Activated CD4-positive, alpha-beta memory T cell treated with anti-CD3 and anti-CD28 coated beads for 36 hours (primary cell): ENCODE measurements at regions of chrX and their contacts with region 1.

Region 1: DNA sequence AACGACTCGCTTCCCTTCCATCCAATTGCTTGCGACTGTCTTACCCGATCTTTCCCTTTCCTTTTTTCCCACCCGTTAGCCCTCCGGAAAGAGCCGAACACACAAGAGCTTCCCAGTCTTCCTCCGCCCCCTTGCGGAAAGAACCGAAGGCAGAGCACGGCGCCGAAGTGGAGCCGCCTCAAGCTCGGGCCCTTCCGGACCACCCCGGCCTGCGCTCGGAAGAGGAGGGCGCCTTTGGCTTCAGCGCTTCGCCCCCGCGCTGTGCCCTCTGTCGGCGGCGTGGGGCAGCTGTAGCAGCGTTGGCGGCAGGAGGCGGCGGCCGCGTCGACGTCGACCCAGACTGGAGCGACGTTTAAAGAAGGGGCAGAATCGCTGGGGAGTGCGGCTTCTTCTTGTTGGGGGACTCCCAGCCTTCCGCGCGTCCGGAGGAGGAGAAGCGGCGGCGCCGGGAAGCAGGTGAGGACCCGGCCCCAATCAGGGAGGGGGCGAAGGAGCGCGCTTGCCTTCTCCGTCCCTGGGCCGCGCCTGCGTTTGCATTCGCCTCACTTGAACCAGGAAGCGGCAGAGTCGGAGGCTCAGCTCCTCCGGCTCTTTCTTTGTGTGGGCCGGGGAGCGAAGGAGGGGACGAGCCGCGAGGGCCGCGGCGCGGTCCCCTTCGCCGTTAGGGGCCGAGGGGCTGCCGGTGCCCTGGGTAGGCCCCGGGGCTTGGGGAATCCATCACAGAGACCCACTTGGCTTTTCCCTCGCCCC is at the start of gene ZBTB33:
- DNase-seq: peak; percentile 92
- H3K4me3 Mint-ChIP-seq: peak within 1 kb of the TSS; percentile 92
- H3K27ac Mint-ChIP-seq: peak within 1 kb of the TSS; percentile 93
- H3K4me1 Mint-ChIP-seq: peaks cover 25% of the 10 kb centered on the region
- H3K27me3 Mint-ChIP-seq: no peaks in the 10 kb centered on the region
- total RNA-seq, gene ZBTB33: 13.6 to 14.0 TPM

Region 2: GRCh38 chrX:119638725-119639471 is 611.8 kb before region 1 on chrX:
- CTCF ChIA-PET with region 1: no interaction called
- POLR2A ChIA-PET with region 1: no interaction called
- intact Hi-C with region 1: no loop called
- DNase-seq: no peak
- H3K4me3 Mint-ChIP-seq: no peak overlapping the region
- H3K27ac Mint-ChIP-seq: peak overlapping the region; percentile 28
- H3K4me1 Mint-ChIP-seq: peaks cover 11% of the 10 kb centered on the region
- H3K27me3 Mint-ChIP-seq: no peaks in the 10 kb centered on the region

Region 3: DNA sequence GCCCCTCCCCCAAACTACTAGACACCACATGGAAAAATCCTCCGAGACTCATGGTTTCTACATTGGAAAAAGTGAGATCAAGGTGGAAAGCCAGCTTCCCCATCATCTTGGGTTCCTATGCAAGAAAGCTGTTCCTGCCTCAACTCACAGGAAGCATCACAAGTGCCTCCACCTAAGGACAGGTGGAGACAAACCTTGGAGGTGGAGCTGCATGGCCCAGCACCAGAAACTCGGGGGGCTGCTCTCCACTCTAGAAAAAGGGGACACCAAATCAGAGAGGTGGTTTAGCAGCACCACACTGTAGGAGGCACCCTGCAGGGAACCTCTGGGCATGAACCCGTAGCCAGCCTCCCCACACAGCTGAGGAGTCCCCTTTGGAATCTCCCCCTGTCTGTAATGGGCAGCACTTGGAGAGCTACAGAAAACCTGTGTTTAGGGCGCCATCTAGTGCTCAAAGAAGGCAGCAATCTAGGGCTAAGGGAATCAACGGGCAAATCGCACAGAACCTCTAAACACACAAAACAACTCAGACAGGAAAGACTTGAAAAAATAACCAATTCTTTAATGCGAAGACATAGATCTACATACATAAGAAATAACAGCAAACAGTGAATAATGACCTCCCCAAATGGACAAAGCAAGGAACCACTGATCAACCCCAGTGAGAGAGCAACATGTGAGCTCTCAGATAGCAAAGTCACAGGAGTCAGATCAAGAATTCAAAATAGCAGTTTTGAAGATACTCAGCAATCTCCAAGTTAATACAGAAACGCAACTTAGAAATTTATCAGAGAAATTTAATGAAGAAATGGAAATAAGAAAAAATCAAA is 37.0 kb before region 1 on chrX:
- CTCF ChIA-PET with region 1: interaction called, 11 read pairs
- POLR2A ChIA-PET with region 1: no interaction called
- intact Hi-C with region 1: no loop called
- DNase-seq: peak; percentile 60
- H3K4me3 Mint-ChIP-seq: no peak overlapping the region
- H3K27ac Mint-ChIP-seq: no peak overlapping the region
- H3K4me1 Mint-ChIP-seq: peaks cover 6% of the 10 kb centered on the region
- H3K27me3 Mint-ChIP-seq: no peaks in the 10 kb centered on the region

Region 4: DNA sequence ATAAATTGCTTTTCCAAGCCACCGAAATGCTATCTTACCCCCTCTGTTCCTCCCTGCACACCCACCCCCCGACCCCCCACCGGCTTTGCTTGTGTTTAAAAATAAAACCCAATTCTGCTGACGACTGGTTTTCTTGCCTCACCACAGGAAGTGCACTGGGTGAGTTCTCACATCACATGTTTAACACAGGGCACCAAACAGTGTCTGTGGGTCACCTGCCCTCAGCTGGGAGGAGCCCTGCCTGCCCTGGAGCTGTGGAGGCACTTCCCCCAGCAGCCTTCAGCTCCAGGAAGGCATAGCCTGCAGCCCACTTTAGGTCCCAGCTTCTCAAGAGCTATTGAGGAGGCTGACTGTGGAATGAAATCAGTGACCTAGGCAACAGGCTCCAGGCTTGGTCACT is 51.7 kb after region 1 on chrX:
- CTCF ChIA-PET with region 1: no interaction called
- POLR2A ChIA-PET with region 1: interaction called, 4 read pairs
- intact Hi-C with region 1: loop called (anchors 2 kb)
- DNase-seq: peak; percentile 70
- H3K4me3 Mint-ChIP-seq: no peak overlapping the region
- H3K27ac Mint-ChIP-seq: peak overlapping the region; percentile 43
- H3K4me1 Mint-ChIP-seq: peaks cover 25% of the 10 kb centered on the region
- H3K27me3 Mint-ChIP-seq: no peaks in the 10 kb centered on the region

Region 5: DNA sequence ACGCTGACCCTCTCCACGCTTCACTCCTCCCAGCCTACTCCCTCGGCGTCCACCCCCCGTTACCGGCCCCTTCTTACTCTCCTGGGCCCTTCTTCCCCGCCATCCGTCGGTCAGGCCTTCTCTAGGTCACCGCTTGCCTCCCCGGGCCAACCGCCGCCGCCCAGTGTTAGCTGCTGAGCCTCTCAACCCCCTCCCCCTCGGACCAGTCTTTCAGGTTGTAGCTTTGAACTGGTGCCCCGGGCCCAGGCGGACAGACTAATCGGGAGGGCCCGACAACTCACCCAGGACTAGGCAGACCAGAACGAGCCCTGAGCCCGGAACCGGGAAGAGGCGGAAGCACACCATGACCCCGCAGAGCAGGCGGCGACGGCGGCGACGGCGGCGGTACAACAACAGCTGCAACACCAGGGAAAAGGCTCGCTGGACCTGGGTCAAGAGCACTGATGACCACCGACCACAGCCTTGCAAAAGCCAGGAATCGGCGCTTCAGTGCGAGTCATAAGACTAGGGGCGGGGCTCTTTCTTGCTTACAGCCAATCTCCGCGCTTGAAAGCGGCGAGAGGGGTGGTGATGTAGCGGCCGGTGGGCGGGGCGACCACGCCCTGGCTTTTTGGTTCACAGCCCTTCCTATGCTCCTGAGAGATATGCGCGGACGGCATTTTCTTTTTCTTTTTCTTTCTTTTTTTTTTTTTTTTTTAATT is 218.3 kb after region 1 on chrX and contains the start of gene LAMP2:
- CTCF ChIA-PET with region 1: interaction called, 3 read pairs
- POLR2A ChIA-PET with region 1: no interaction called
- intact Hi-C with region 1: loop called (anchors 5 kb)
- DNase-seq: peak; percentile 90
- H3K4me3 Mint-ChIP-seq: peak within 1 kb of the TSS; percentile 82
- H3K27ac Mint-ChIP-seq: peak within 1 kb of the TSS; percentile 83
- H3K4me1 Mint-ChIP-seq: peaks cover 16% of the 10 kb centered on the region
- H3K27me3 Mint-ChIP-seq: no peaks in the 10 kb centered on the region
- total RNA-seq, gene LAMP2: 38.5 to 38.7 TPM

Region 6: GRCh38 chrX:120560842-120561633 is 310.3 kb after region 1 on chrX and contains the start of gene CUL4B:
- CTCF ChIA-PET with region 1: no interaction called
- POLR2A ChIA-PET with region 1: no interaction called
- intact Hi-C with region 1: loop called (anchors 2 kb)
- DNase-seq: peak; percentile 95
- H3K4me3 Mint-ChIP-seq: peak within 1 kb of the TSS; percentile 95
- H3K27ac Mint-ChIP-seq: peak within 1 kb of the TSS; percentile 95
- H3K4me1 Mint-ChIP-seq: peaks cover 24% of the 10 kb centered on the region
- H3K27me3 Mint-ChIP-seq: no peaks in the 10 kb centered on the region
- total RNA-seq, gene CUL4B: 39.4 to 40.2 TPM